AG04449 (cell line): ENCODE measurements at regions of chr6 and their contacts with region 1.

Region 1: DNA sequence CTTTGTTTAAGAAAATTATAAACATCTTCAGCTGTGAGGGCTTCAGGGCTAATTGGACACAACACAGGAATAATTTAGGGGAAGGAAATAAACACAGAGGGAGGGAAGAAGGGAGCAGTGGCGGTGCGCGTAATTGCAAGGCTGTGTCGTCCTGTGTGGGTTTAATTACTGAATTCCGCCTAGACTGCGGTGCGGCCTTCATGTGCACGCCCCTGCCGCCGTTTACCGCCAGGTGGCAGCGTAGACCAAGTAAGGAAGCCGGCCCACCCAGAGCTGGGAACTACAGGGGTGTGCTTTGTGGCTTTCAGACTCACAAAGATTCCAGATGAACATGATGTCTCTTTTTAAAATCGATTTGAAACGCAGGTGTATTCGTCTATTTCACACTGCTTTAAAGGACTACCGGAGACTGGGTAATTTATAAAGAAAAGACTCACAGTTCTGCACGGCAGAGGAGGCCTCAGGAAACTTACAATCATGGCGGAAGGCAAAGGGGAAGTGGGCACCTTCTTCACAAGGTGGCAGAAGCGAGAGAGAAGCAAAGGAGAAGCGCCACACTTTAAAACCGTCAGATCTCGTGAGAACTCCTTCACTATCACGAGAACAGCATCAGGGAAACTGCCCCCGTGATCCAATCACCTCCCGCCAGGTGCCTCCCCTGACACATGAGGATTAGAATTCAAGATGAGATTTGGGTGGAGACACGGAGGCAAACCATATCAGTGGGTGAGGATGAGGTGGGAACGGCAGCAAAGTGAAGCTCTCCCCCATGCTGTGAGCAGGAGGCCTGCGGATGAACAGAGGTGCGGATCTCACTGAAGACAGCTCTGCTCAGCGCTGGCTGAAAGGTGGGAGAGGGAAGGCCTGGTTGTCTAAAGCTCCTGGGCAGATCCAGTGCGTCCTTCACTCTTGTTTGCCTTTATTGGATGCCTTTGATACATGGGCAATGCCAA is 222.0 kb upstream of the PDE10A start:
- DNase-seq: no peak
- H3K4me3 ChIP-seq: no peak overlapping the region
- CTCF ChIP-seq: peak; percentile 94

Region 2: GRCh38 chr6:165899611-165900010 is 14.5 kb after region 1 on chr6:
- CTCF ChIA-PET with region 1: interaction called, 15 read pairs
- POLR2A ChIA-PET with region 1: no interaction called
- DNase-seq: no peak
- H3K4me3 ChIP-seq: no peak overlapping the region
- CTCF ChIP-seq: no peak

Region 3: GRCh38 chr6:165950316-165950715 is 65.2 kb after region 1 on chr6:
- CTCF ChIA-PET with region 1: interaction called, 10 read pairs
- POLR2A ChIA-PET with region 1: no interaction called
- DNase-seq: no peak
- H3K4me3 ChIP-seq: no peak overlapping the region
- CTCF ChIP-seq: no peak

Region 4: DNA sequence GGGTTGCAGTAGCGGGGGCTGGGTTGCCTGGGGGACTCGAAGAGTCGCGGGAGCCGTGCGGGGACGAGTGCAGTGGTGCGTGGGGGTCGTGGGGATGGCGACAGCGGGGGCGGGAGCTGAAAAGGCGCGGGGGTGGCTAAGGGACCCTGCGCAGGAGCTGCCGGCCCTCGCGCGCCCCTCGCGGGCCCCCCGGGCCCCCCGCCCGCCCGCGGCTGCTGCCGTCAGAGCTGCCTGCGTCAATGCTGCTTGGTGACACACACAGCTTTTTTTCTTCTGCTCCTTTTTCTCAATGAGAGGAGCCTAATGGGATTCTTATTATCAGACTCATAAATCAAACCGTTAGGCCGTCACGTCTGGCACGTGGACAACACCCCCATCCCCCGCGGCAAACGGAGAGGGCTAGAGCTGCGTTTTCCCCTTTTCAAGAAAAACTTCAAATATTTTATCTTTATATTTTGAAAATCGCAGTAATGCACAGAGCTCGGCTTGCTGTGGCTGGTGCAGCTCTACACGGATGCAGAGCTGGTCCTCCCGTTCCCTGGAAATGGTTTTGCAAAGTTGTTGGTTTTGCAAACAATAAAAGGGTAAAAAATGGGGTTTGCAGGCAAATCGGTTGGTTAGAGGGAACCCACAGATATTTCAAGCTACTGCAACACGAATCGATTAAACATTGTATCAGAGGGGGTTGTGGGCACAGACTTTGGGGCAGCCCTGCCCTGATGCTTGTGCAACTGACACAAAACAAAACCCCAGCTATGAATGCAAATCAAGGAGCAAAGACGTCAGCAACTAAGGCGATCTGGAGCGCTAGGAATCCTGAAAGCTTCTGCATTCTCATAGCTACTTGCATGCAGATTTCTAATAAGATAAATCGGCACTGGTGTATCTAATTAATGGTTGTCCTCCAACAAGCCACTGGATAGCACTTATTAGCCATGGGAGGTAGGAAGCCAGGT is 121.1 kb after region 1 on chr6:
- CTCF ChIA-PET with region 1: interaction called, 13 read pairs
- POLR2A ChIA-PET with region 1: no interaction called
- DNase-seq: peak; percentile 84
- H3K4me3 ChIP-seq: peak overlapping the region; percentile 49
- CTCF ChIP-seq: no peak

Region 5: DNA sequence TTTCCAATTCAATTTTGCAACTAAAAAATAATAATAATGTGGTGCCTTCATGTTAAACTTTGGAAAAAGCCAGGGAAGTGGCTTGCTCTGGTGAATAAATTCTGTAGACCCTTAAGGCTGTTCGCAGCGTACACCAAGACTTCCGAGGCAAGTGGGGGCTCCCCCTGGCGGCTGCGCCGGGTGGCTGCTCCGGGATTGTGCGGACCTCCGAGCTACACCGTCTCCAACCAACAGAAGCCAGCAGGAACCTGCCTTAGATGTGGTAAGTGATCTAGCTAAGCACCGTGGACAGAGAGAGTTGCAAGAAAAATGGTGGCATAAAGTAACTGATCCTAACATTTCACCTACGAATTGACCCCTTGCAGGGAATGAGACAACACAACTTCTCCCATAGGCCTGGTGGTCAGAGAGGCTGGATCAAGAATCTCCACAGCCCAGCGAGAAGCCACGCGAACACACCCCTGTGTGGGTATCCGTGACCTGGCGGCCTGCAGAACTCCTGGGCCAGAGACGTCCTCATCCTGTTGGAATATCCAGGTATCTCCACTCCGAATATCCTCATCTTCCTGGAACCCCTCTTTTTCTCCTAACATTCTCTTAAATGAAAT is 212.9 kb after region 1 on chr6:
- CTCF ChIA-PET with region 1: interaction called, 415 read pairs
- POLR2A ChIA-PET with region 1: no interaction called
- DNase-seq: peak; percentile 14
- H3K4me3 ChIP-seq: peak overlapping the region; percentile 48
- CTCF ChIP-seq: peak; percentile 95

Region 6: GRCh38 chr6:166106076-166106686 is 221.1 kb after region 1 on chr6:
- CTCF ChIA-PET with region 1: interaction called, 415 read pairs
- POLR2A ChIA-PET with region 1: no interaction called
- DNase-seq: peak; percentile 10
- H3K4me3 ChIP-seq: no peak overlapping the region
- CTCF ChIP-seq: peak; percentile 84